H1 (cell line): ENCODE measurements at regions of chr1 and their contacts with region 1.

Region 1: GRCh38 chr1:27284425-27285273 is 37.3 kb upstream of the TMEM222 start:
- DNase-seq: peak in 1 of 2 experiments; percentile 90
- H3K4me3 ChIP-seq: no peak overlapping the region
- H3K27ac ChIP-seq: no peak overlapping the region
- H3K4me1 ChIP-seq: no peaks in the 10 kb centered on the region
- H3K27me3 ChIP-seq: no peaks in the 10 kb centered on the region
- CTCF ChIP-seq: peak; percentile 76 to 81 (median 77)
- EP300 ChIP-seq: no peak
- POLR2A ChIP-seq: no peak
- RAD21 ChIP-seq: peak; percentile 74 to 75

Region 2: DNA sequence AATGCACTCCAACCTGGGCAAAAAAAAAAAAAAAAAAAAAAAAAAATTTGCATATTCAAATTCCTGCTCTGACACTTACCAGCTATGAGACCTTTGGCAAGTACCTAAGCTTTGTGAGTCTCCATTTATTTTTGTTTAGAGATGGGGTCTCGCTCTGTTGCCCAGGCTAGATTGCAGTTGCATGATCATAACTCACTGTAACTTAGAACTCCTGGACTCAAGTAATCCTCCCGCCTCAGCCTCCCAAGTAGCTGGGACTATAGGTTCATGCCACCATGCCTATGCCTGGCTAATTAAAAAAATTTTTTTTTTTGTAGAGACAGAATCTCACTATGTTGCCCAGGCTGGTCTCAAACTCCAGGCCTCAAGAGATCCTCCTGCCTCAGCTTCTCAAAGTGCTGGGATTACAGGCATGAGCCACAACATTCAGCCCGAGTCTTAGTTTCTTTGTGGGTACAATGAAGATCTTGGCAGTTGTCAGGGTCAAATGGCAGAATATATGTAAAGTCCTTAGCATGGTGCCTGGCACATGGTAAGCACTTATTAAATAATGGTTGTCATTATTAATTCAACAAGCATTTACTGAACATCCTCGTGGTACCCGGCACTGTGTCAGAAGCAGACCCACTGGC is 218.5 kb before region 1 on chr1:
- CTCF ChIA-PET with region 1: no interaction called
- POLR2A ChIA-PET with region 1: no interaction called
- DNase-seq: no peak
- H3K4me3 ChIP-seq: no peak overlapping the region
- H3K27ac ChIP-seq: no peak overlapping the region
- H3K4me1 ChIP-seq: peaks cover 0 to 6% (median 4%) of the 10 kb centered on the region in 4 experiments; a peak in 5 of 7 replicates
- H3K27me3 ChIP-seq: no peaks in the 10 kb centered on the region
- CTCF ChIP-seq: no peak
- EP300 ChIP-seq: no peak
- POLR2A ChIP-seq: no peak
- RAD21 ChIP-seq: no peak

Region 3: DNA sequence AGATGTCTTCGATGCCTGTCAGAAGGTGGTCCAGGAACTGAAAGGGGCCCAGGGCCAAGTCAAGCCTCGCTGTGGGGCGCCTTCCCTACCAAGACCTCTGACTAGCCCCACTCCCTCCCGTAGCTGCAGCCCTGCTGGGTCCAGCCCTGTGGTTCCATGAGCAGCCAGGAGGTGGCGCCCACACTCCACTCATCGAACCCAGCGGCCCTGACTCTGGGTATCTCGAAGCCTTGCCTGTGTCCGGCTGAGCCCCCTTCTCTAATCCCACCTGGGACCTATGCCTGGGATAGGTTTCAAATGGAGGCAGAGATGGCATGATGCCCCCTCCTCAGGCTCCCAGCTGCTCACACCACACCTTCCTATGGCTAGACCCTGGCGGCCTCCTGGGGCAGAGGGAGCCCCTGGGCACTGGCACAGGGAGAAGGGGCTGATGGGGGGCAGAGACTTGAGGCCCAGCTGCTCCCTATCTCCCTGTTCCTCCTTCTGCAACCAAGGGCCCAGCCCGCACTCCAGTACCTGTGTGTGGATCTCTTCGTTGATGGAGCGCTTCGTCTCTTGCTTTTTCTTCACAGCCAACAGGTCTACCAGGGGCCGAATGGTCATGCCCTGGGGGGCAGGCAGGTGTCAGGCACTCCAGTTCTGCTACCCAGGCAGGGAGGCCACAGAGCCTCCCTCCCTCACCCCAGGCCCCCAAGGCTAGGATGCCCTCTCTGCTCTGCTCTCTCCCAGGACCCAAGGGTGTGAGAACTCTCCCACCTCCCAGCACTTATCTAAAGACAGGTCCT is 181.8 kb before region 1 on chr1:
- CTCF ChIA-PET with region 1: interaction called, 101 read pairs
- POLR2A ChIA-PET with region 1: interaction called, 5 read pairs
- DNase-seq: peak; percentile 49 to 100
- H3K4me3 ChIP-seq: no peak overlapping the region
- H3K27ac ChIP-seq: no peak overlapping the region
- H3K4me1 ChIP-seq: peaks cover 0 to 21% (median 14%) of the 10 kb centered on the region in 4 experiments; a peak in 6 of 7 replicates
- H3K27me3 ChIP-seq: no peaks in the 10 kb centered on the region
- CTCF ChIP-seq: peak in 2 of 3 experiments; percentile 97 to 99; a peak in 3 of 4 replicates
- EP300 ChIP-seq: no peak
- POLR2A ChIP-seq: no peak
- RAD21 ChIP-seq: peak; percentile 98 to 99

Region 4: DNA sequence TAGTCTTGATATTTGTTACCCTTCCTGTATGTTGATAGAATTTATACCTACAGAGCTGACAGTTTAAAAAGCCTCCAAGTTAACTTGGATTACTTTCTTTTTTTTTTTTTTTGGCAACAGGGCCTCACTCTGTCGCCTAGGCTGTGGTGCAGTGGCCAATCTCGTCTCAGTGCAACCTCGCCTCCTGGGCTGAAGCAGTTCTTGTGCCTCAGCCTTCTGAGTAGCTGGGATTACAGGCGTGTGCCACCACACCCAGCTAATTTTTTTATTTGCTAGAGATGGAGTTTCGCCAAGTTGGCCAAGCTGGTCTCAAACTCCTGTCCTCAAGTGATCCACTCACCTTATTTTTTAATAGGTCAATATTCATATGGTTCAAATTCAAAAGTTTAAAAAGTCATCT is 17.5 kb before region 1 on chr1:
- CTCF ChIA-PET with region 1: interaction called, 21 read pairs
- POLR2A ChIA-PET with region 1: interaction called, 3 read pairs
- DNase-seq: no peak
- H3K4me3 ChIP-seq: no peak overlapping the region
- H3K27ac ChIP-seq: no peak overlapping the region
- H3K4me1 ChIP-seq: no peaks in the 10 kb centered on the region
- H3K27me3 ChIP-seq: no peaks in the 10 kb centered on the region
- CTCF ChIP-seq: no peak
- EP300 ChIP-seq: no peak
- POLR2A ChIP-seq: no peak
- RAD21 ChIP-seq: no peak